Aorta (tissue), 5 donors: ENCODE measurements at regions of chr10 and their contacts with region 1.

Region 1: DNA sequence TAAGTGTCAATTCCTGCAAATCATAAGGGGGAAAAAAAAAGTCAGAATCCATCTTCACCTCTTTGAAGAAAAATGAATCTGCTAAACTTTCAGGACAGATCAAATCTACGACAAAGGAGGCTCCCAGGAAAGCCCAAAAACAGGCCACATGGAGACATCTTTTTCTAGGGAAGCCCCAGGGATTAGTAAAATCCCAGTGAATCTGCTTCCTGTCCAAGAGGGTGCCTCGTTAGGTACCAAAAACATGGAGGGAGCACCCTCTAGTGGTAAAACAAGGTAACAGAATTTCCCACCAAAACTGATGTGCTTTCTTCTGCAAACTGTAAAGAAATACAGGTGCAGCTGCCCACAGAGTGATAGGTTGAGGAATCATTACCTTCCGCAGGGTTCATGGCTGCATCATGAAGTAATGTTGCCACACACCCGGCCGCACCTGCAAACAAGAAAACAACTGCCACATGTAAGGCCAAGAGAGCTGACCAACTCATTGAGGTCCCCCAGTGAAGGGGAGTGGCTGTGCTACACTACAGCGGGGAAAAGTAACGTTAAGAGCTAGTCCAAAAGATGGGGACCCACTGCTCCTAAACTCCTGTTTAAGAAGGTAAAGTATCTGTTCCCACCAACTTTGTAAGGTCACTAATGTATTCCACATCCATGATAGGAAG is 7.9 kb downstream of the SLC25A28 start:
- DNase-seq: no peak
- ATAC-seq: peak; percentile 72
- H3K4me3 ChIP-seq: no peak overlapping the region
- H3K27ac ChIP-seq: no peak overlapping the region
- H3K4me1 ChIP-seq: no peaks in the 10 kb centered on the region
- H3K27me3 ChIP-seq: no peaks in the 10 kb centered on the region

Region 2: GRCh38 chr10:99394761-99395386 is 217.4 kb before region 1 on chr10:
- intact Hi-C with region 1: loop called (anchors 2 to 5 kb)
- DNase-seq: no peak
- ATAC-seq: no peak
- H3K4me3 ChIP-seq: no peak overlapping the region
- H3K27ac ChIP-seq: no peak overlapping the region
- H3K4me1 ChIP-seq: no peaks in the 10 kb centered on the region
- H3K27me3 ChIP-seq: no peaks in the 10 kb centered on the region

Region 3: GRCh38 chr10:99435986-99436638 is 176.2 kb before region 1 on chr10:
- intact Hi-C with region 1: loop called in 1 of 2 experiments (anchors 2 kb)
- DNase-seq: no peak
- ATAC-seq: peak; percentile 70
- H3K4me3 ChIP-seq: no peak overlapping the region
- H3K27ac ChIP-seq: no peak overlapping the region
- H3K4me1 ChIP-seq: no peaks in the 10 kb centered on the region
- H3K27me3 ChIP-seq: no peaks in the 10 kb centered on the region

Region 4: GRCh38 chr10:99520040-99520846 is 92.1 kb before region 1 on chr10:
- intact Hi-C with region 1: no loop called
- DNase-seq: no peak
- ATAC-seq: no peak
- H3K4me3 ChIP-seq: no peak overlapping the region
- H3K27ac ChIP-seq: no peak overlapping the region
- H3K4me1 ChIP-seq: no peaks in the 10 kb centered on the region
- H3K27me3 ChIP-seq: no peaks in the 10 kb centered on the region

Region 5: DNA sequence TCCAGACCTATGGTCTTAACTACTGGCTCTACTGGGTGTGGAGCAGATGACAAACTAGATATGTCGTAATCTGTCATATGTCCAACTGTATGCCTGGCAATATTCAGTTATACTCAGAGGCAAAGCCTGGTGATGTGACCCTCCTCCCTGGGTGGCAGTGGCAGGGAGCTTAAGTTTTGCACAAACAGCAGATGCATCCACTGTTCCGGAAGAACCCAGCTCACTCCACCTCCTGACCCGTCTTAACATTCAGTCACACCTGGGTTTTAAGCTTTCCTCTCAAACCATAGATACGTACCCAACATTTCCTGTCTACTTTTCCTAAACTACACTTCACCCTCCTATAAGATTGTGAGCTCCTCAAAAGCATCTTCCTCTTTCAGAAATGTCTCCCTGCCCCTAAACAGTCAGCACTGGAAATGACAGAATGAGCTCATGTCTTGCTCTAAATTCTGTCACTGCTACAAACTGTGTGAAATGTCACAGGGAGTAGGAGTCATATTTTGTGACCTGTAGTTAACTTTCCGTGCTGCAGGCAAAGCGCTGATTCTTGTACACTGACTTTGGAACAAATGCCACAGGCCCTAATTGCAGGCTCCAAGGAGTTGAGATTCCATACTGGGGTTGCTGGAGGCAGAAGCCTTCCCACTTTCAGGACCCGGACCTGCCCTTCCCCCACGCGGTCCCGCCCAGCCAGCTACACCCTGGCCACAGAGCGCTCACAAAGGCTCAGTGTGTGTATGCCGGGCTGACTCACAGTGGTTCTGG is 758.6 kb after region 1 on chr10:
- intact Hi-C with region 1: no loop called
- DNase-seq: peak; percentile 90 to 93
- ATAC-seq: peak; percentile 76
- H3K4me3 ChIP-seq: no peak overlapping the region
- H3K27ac ChIP-seq: peak overlapping the region in 1 of 2 donors; percentile 67
- H3K4me1 ChIP-seq: peaks cover 0 to 10% of the 10 kb centered on the region in 2 donors
- H3K27me3 ChIP-seq: no peaks in the 10 kb centered on the region